Right ventricle myocardium inferior (tissue), 1 donor: ENCODE measurements at regions of chr10 and their contacts with region 1.

Region 1: GRCh38 chr10:18260310-18260922 is 120.2 kb downstream of the CACNB2 start:
- DNase-seq: no peak
- ATAC-seq: no peak

Region 2: GRCh38 chr10:18294633-18295032 is 34.2 kb after region 1 on chr10:
- intact Hi-C with region 1: loop called (anchors 5 kb)
- DNase-seq: no peak
- ATAC-seq: no peak

Region 3: GRCh38 chr10:19290770-19291169 is 1030.4 kb after region 1 on chr10:
- intact Hi-C with region 1: no loop called
- DNase-seq: no peak
- ATAC-seq: no peak